ENCODE measurements at regions of chr2 and their contacts with region 1.

Region 1: DNA sequence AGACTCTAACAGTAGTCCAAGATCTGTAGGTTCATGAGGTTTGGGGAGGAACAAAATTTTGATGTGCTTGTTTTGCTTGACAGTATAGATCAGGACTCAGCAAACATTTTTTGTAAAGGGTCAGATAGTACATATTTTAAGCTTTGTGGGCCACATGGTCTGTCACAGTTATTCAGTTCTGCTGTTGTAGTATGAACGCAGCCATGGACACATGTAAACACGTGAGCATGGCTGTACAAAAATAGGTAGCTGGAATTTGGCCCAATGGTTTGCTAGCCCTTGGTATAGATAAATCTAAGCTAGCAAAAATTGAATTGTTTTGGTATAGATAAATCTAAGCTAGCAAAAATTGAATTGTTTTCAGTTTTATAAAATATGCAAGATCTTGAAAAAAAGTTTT is 120.5 kb downstream of the HIBCH start:
- DNase-seq: no peak
- H3K27ac ChIP-seq: no peak overlapping the region
- CTCF ChIP-seq: no peak

Region 2: DNA sequence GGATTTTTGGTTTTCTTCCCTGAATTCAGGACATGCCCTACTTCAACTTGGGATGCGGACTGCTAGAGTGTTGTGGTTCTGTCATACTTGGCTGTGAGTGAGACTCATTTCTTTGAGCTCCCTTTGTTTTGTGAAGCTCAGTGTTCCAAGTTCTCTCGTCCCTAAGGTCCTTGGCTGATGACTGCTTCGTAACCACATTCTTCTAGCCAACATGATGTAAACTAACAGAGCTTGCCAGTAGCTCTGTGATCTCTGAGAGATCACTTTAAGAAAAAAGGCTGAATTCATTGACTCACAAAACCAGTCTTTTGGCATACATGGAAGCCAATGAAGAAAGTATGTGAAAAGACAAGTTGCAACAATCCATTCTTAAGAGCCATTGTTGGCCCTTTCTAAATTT is 39.7 kb before region 1 on chr2:
- CTCF ChIA-PET with region 1: no interaction called
- POLR2A ChIA-PET with region 1: interaction called, 10 read pairs
- DNase-seq: no peak
- H3K27ac ChIP-seq: no peak overlapping the region
- CTCF ChIP-seq: no peak

Region 3: GRCh38 chr2:190425221-190425866 is 226.2 kb after region 1 on chr2:
- CTCF ChIA-PET with region 1: no interaction called
- POLR2A ChIA-PET with region 1: no interaction called
- DNase-seq: no peak
- H3K27ac ChIP-seq: no peak overlapping the region
- CTCF ChIP-seq: no peak